ENCODE measurements at regions of chr11 and their contacts with region 1.

Region 1: DNA sequence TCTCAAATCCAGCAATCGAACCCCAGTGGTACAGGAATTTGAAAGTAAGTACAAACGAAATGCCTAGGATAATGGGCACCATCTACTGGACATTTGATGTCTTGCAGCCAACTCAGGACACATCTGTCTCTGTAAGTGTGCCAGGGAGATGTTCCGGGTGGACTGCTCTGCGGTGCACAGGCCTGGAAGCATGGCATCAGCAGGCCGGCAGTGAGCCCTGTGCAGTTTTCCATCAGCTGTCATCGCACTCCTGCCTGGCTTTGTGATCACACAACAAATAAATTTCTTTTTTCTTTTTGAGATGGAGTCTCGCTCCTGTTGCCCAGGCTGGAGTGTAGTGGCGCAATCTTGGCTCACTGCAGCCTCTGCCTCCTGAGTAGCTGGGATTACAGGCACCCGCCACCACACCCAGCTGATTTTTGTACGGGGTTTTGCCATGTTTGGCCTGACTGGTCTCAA is 71.0 kb downstream of the JAM3 start:
- DNase-seq: peak; percentile 63 to 77
- H3K4me3 ChIP-seq: no peak overlapping the region
- H3K4me1 ChIP-seq: no peaks in the 10 kb centered on the region
- H3K27me3 ChIP-seq: no peaks in the 10 kb centered on the region

Region 2: DNA sequence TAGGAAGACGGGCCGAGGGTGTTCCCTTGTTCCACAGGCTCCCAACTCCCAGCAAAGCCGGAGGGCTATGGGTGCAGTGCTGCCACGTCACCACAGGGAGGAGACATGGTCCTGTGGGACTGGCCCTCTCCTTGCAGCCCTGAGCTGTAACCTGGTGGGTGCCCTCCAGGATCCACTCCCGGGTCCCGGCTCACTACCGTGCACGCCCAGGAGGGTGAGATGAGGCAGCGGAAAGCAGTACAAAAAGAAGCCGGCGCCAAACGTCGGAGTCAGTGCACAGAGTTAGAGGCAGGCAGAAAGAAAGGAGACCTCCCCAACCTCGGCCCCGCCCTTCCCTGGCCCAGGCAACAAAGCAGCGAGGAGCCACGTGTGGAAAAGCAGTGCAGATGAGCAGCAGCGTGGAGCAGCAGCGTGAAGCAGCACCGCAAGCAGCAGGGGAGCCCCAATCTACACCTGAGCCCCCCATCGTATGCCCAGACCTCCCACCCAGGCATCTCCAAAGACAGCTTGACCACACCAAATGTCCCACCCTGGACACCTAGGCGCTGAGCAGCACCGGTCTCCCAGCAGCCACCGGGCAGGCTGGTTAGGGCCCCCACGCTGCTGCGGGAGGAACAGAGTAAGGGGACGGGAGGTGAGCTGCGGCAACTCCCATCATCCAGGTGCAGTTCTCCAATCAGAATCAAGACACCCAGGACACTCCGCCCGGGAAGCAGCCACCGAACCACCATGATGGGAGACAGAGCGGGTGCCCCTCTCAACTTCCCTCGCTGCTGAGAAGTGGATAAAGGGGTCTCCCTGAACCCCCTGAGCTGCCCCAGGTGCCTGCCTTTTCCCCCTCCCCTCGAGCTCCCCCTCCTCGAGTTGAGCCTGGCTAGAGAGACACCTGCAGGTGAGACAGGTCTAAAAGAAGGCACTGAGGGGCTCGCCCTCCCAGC is 211.9 kb before region 1 on chr11:
- in situ Hi-C with region 1: loop called (anchors 5 kb)
- DNase-seq: peak; percentile 54 to 88
- H3K4me3 ChIP-seq: no peak overlapping the region
- H3K4me1 ChIP-seq: peaks cover 5% of the 10 kb centered on the region
- H3K27me3 ChIP-seq: no peaks in the 10 kb centered on the region

Region 3: DNA sequence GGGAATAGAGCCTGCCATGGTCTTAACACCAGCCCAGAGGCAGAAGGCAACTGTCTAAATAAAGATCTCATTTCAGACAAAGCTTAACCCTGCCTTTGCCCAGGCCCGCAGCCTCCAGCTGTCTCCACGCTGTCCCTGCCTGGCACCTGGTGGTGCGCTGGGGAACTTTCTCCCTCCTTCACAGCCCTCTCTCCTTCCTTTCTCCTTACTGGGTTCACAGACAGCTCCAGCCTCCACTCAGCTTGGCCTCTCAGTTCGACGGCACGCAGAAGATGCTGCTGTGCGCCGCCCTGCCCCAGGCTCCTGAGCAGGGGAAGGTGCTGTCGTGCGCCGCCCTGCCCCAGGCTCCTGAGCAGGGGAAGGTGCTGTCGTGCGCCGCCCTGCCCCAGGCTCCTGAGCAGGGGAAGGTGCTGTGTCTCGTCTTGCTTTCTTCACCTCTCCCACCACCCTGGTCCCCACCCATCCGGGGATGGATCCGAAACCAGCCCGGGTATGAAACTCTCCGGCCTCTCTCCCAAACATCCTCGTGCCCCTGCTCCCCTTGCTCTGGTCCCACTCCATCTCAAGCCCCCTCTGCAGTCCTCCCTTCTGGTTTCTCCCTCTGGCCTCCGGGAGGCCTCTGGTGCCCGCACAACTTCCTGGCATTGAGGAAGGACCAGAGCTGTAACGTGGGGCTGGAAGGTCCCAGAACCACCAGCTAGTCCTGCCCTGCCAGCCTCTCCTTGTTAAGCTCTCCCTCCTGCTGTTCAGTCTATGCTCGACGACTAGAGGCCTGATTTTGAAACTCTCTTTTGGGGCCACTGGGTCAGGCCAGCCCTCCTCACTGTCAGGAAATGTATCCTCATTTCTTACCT is 93.9 kb before region 1 on chr11:
- in situ Hi-C with region 1: loop called (anchors 5 kb)
- DNase-seq: no peak
- H3K4me3 ChIP-seq: no peak overlapping the region
- H3K4me1 ChIP-seq: peaks cover 4% of the 10 kb centered on the region; the same call in 1 of the 2 replicates
- H3K27me3 ChIP-seq: no peaks in the 10 kb centered on the region

Measured in HAP-1 (cell line).